ENCODE measurements at regions of chr7 and their contacts with region 1.

Region 1: GRCh38 chr7:140745266-140746058 is 49.0 kb downstream of the NDUFB2 start:
- DNase-seq: no peak
- ATAC-seq: no peak
- H3K4me3 Mint-ChIP-seq: no peak overlapping the region
- H3K27ac Mint-ChIP-seq: no peak overlapping the region
- H3K4me1 Mint-ChIP-seq: no peaks in the 10 kb centered on the region
- H3K27me3 Mint-ChIP-seq: no peaks in the 10 kb centered on the region

Region 2: GRCh38 chr7:141115965-141116364 is 370.5 kb after region 1 on chr7:
- CTCF ChIA-PET with region 1: no interaction called
- POLR2A ChIA-PET with region 1: interaction called, 17 read pairs
- intact Hi-C with region 1: no loop called
- DNase-seq: no peak
- ATAC-seq: no peak
- H3K4me3 Mint-ChIP-seq: no peak overlapping the region
- H3K27ac Mint-ChIP-seq: no peak overlapping the region
- H3K4me1 Mint-ChIP-seq: no peaks in the 10 kb centered on the region
- H3K27me3 Mint-ChIP-seq: peaks cover 3% of the 10 kb centered on the region